Natural killer cell (primary cell): ENCODE measurements at regions of chrX and their contacts with region 1.

Region 1: DNA sequence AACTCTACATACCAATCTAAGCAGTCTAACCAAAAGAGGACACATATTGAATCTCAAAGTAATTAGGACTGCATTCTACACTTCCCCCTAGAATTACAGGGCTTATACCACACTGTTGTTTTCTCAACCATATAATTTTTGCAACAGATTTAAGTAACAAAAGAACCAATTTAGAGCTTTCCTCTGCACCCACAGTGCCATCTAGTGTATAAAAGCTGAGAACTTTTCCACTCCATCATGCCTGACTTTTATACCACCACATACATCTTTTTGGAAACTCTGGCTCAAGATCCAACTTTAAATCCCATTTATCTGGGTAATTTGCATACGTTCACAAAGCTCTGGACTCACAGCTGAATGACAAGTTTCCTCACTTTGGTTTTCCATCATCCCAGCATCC is 99.5 kb downstream of the EFHC2 start:
- DNase-seq: peak in 1 of 2 donors; percentile 58
- ATAC-seq: peak in 2 of 3 donors; percentile 50 to 53
- H3K4me3 ChIP-seq: no peak overlapping the region
- H3K4me3 Mint-ChIP-seq: no peak overlapping the region
- H3K27ac ChIP-seq: no peak overlapping the region
- H3K27ac Mint-ChIP-seq: peak overlapping the region; percentile 16 to 79
- H3K4me1 ChIP-seq: peaks cover 6% of the 10 kb centered on the region
- H3K4me1 Mint-ChIP-seq: peaks cover 20 to 22% of the 10 kb centered on the region in 2 donors
- H3K27me3 ChIP-seq: no peaks in the 10 kb centered on the region
- H3K27me3 Mint-ChIP-seq: peaks cover 0 to 7% of the 10 kb centered on the region in 2 donors
- CTCF ChIP-seq: peak; percentile 41

Region 2: GRCh38 chrX:43836435-43837184 is 407.4 kb before region 1 on chrX:
- intact Hi-C with region 1: loop called (anchors 5 kb)
- DNase-seq: peak in 1 of 2 donors; percentile 43
- ATAC-seq: peak in 1 of 3 donors; percentile 55
- H3K4me3 ChIP-seq: no peak overlapping the region
- H3K4me3 Mint-ChIP-seq: no peak overlapping the region
- H3K27ac ChIP-seq: no peak overlapping the region
- H3K27ac Mint-ChIP-seq: no peak overlapping the region
- H3K4me1 ChIP-seq: no peaks in the 10 kb centered on the region
- H3K4me1 Mint-ChIP-seq: no peaks in the 10 kb centered on the region
- H3K27me3 ChIP-seq: no peaks in the 10 kb centered on the region
- H3K27me3 Mint-ChIP-seq: peaks cover 8 to 30% of the 10 kb centered on the region in 2 donors
- CTCF ChIP-seq: peak; percentile 52

Region 3: DNA sequence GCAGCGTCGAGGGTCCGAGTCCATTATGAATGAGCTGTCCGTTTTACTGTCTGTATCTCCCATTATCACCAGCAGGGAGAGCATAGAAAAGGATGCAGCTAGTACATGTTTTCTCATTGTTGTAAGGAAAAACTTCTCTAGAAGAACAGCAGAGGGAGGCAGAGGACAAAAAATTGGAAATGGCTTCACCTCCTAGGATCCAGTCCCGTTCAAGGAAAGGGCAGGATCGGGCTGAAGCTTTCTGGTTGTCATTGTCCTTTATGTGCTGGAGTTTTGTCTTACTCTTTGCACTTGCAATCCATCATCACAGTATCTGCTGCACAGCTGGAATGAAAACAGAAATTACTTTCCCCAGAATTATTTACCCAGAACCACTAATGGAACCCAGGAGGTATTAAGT is 285.5 kb before region 1 on chrX:
- intact Hi-C with region 1: loop called (anchors 1 kb)
- DNase-seq: peak in 1 of 2 donors; percentile 74
- ATAC-seq: peak; percentile 64 to 90 (median 88)
- H3K4me3 ChIP-seq: no peak overlapping the region
- H3K4me3 Mint-ChIP-seq: no peak overlapping the region
- H3K27ac ChIP-seq: no peak overlapping the region
- H3K27ac Mint-ChIP-seq: no peak overlapping the region
- H3K4me1 ChIP-seq: no peaks in the 10 kb centered on the region
- H3K4me1 Mint-ChIP-seq: peaks cover 5 to 7% of the 10 kb centered on the region in 2 donors
- H3K27me3 ChIP-seq: no peaks in the 10 kb centered on the region
- H3K27me3 Mint-ChIP-seq: peaks cover 3 to 40% of the 10 kb centered on the region in 2 donors
- CTCF ChIP-seq: peak; percentile 75

Region 4: GRCh38 chrX:44343412-44344141 is 99.6 kb after region 1 on chrX and contains the start of gene EFHC2:
- intact Hi-C with region 1: loop called (anchors 5 kb)
- DNase-seq: peak; percentile 61 to 80
- ATAC-seq: peak; percentile 65 to 83 (median 70)
- H3K4me3 ChIP-seq: peak within 1 kb of the TSS; percentile 68
- H3K4me3 Mint-ChIP-seq: peak within 1 kb of the TSS; percentile 92
- H3K27ac ChIP-seq: peak within 1 kb of the TSS; percentile 98
- H3K27ac Mint-ChIP-seq: peak within 1 kb of the TSS; percentile 94 to 99
- H3K4me1 ChIP-seq: peaks cover 31% of the 10 kb centered on the region
- H3K4me1 Mint-ChIP-seq: peaks cover 20 to 21% of the 10 kb centered on the region in 2 donors
- H3K27me3 ChIP-seq: no peaks in the 10 kb centered on the region
- H3K27me3 Mint-ChIP-seq: peaks cover 0 to 6% of the 10 kb centered on the region in 2 donors
- CTCF ChIP-seq: no peak
- total RNA-seq, gene EFHC2: 5.7 to 9.1 (median 8.9) TPM